ENCODE measurements at regions of chr11 and their contacts with region 1.

Region 1: GRCh38 chr11:44188643-44189042 is 93.2 kb downstream of the EXT2 start:
- DNase-seq: no peak
- H3K4me3 ChIP-seq: no peak overlapping the region
- H3K27ac ChIP-seq: peak overlapping the region; percentile 83
- H3K4me1 ChIP-seq: peaks cover 78% of the 10 kb centered on the region
- H3K27me3 ChIP-seq: no peaks in the 10 kb centered on the region
- CTCF ChIP-seq: no peak

Region 2: GRCh38 chr11:43053638-43054412 is 1134.8 kb before region 1 on chr11:
- CTCF ChIA-PET with region 1: no interaction called
- POLR2A ChIA-PET with region 1: no interaction called
- intact Hi-C with region 1: loop called (anchors 5 kb)
- DNase-seq: peak; percentile 93
- H3K4me3 ChIP-seq: no peak overlapping the region
- H3K27ac ChIP-seq: peak overlapping the region; percentile 88
- H3K4me1 ChIP-seq: peaks cover 32% of the 10 kb centered on the region
- H3K27me3 ChIP-seq: no peaks in the 10 kb centered on the region
- CTCF ChIP-seq: no peak

Region 3: DNA sequence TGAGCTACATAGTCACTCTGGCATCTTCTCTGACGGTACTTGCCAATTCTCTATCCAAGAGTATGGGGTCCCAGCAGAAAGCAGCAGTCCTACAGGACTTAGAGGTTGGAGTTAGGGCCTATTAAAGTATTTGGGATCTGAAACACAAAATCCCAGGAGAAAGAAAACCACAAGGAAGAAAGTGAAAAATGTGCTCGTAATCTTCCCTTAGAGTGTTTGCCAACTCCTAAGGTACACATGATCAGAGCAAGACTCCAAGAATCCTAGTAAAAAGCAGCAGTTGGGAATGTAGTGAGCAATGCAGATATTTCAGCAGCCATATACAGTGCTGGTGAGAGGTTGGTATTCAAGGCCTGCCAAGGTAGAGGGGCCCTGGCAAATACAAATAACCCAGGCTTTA is 21.6 kb before region 1 on chr11:
- CTCF ChIA-PET with region 1: no interaction called
- POLR2A ChIA-PET with region 1: interaction called, 10 read pairs
- intact Hi-C with region 1: no loop called
- DNase-seq: no peak
- H3K4me3 ChIP-seq: no peak overlapping the region
- H3K27ac ChIP-seq: no peak overlapping the region
- H3K4me1 ChIP-seq: peaks cover 20% of the 10 kb centered on the region
- H3K27me3 ChIP-seq: no peaks in the 10 kb centered on the region
- CTCF ChIP-seq: no peak

Region 4: DNA sequence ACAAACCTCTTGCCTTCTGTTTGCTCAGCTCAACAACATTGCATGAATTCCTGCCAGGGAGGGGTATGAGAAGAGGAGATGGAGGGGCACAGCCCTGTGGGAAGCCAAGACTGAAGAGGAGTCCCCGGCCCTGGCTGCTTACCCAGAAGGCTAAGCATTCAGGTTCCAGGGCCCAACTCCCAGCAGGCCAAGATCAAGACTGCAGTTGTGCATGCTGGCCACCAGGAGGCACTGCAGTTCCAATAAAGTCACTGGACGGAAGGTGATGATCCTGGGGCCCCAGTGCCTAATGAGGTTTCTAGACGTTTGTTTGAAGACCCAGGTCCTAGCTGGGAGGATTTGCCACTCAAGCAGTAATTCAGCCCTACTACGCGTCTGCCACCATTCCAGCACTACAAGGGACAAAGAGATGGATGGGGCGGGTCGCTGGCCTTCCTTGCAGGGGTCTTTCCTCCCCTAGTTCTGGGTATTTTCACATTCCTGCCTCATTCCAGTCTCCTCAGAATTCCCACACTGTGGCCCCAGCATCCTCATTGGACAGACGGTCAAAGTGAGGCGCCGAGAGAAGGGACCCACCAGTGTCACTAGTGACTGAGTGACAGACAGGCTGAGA is 97.7 kb after region 1 on chr11:
- CTCF ChIA-PET with region 1: no interaction called
- POLR2A ChIA-PET with region 1: interaction called, 5 read pairs
- intact Hi-C with region 1: loop called (anchors 5 kb)
- DNase-seq: peak; percentile 91
- H3K4me3 ChIP-seq: no peak overlapping the region
- H3K27ac ChIP-seq: peak overlapping the region; percentile 53
- H3K4me1 ChIP-seq: peaks cover 51% of the 10 kb centered on the region
- H3K27me3 ChIP-seq: no peaks in the 10 kb centered on the region
- CTCF ChIP-seq: peak; percentile 100

Region 5: GRCh38 chr11:44361813-44362212 is 173.2 kb after region 1 on chr11:
- CTCF ChIA-PET with region 1: no interaction called
- POLR2A ChIA-PET with region 1: interaction called, 14 read pairs
- intact Hi-C with region 1: no loop called
- DNase-seq: peak; percentile 35
- H3K4me3 ChIP-seq: no peak overlapping the region
- H3K27ac ChIP-seq: no peak overlapping the region
- H3K4me1 ChIP-seq: no peaks in the 10 kb centered on the region
- H3K27me3 ChIP-seq: no peaks in the 10 kb centered on the region
- CTCF ChIP-seq: no peak

Measured in A673 (cell line).